ENCODE measurements at regions of chr17 and their contacts with region 1.

Region 1: GRCh38 chr17:76204277-76204676 is 36.0 kb downstream of the RNF157 start:
- DNase-seq: no peak
- ATAC-seq: no peak
- H3K4me3 Mint-ChIP-seq: no peak overlapping the region
- H3K27ac Mint-ChIP-seq: no peak overlapping the region
- H3K4me1 Mint-ChIP-seq: peaks cover 17% of the 10 kb centered on the region
- H3K27me3 Mint-ChIP-seq: no peaks in the 10 kb centered on the region
- CTCF ChIP-seq: no peak

Region 2: DNA sequence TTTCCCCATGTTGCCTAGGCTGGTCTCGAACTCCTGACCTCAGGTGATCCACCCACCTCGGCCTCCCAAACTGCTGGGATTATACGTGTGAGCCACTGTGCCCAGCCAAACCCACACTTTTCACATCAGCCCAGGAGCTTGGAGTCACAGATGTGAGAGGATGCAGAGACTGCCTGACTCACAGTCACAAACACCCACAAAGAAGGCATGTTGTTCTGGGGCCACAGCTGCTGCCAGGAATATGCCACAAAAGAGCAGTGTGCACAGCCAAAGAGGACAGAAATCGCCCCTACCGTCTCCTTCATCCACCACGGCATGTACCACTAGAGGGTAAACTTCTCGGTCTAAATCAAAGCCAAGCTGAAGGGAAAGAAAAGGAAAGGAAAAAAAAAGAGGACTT is 38.1 kb before region 1 on chr17:
- CTCF ChIA-PET with region 1: no interaction called
- POLR2A ChIA-PET with region 1: interaction called, 11 read pairs
- intact Hi-C with region 1: no loop called
- DNase-seq: no peak
- ATAC-seq: no peak
- H3K4me3 Mint-ChIP-seq: no peak overlapping the region
- H3K27ac Mint-ChIP-seq: no peak overlapping the region
- H3K4me1 Mint-ChIP-seq: no peaks in the 10 kb centered on the region
- H3K27me3 Mint-ChIP-seq: no peaks in the 10 kb centered on the region
- CTCF ChIP-seq: no peak

Region 3: GRCh38 chr17:76384222-76384986 is 180.1 kb after region 1 on chr17 and contains the start of gene SPHK1:
- CTCF ChIA-PET with region 1: no interaction called
- POLR2A ChIA-PET with region 1: no interaction called
- intact Hi-C with region 1: no loop called
- DNase-seq: peak; percentile 77
- ATAC-seq: peak; percentile 75
- H3K4me3 Mint-ChIP-seq: peak within 1 kb of the TSS; percentile 86
- H3K27ac Mint-ChIP-seq: peak within 1 kb of the TSS; percentile 71
- H3K4me1 Mint-ChIP-seq: peaks cover 15% of the 10 kb centered on the region
- H3K27me3 Mint-ChIP-seq: peaks cover 2% of the 10 kb centered on the region
- CTCF ChIP-seq: no peak
- total RNA-seq, gene SPHK1: 1.1 and 1.3 TPM in 2 replicates

Measured in activated B cell treated with CpG ODN at 0.5 μM for 24 hours (primary cell).